Activated CD8-positive, alpha-beta T cell treated with anti-CD3 and anti-CD28 coated beads, Interleukin-2, amount 10 ng/mL, durations not matched to agents 7 days and 5 days (primary cell): ENCODE measurements at regions of chr19 and their contacts with region 1.

Region 1: GRCh38 chr19:54023191-54023590 is 31.8 kb downstream of the CACNG6 start:
- DNase-seq: no peak
- ATAC-seq: no peak
- H3K4me3 Mint-ChIP-seq: no peak overlapping the region
- H3K27ac Mint-ChIP-seq: no peak overlapping the region
- H3K4me1 Mint-ChIP-seq: peaks cover 13% of the 10 kb centered on the region
- H3K27me3 Mint-ChIP-seq: peaks cover 10% of the 10 kb centered on the region

Region 2: GRCh38 chr19:53844849-53845246 is 178.3 kb before region 1 on chr19:
- CTCF ChIA-PET with region 1: interaction called, 10 read pairs
- POLR2A ChIA-PET with region 1: interaction called, 3 read pairs
- DNase-seq: no peak
- ATAC-seq: no peak
- H3K4me3 Mint-ChIP-seq: no peak overlapping the region
- H3K27ac Mint-ChIP-seq: no peak overlapping the region
- H3K4me1 Mint-ChIP-seq: peaks cover 7% of the 10 kb centered on the region
- H3K27me3 Mint-ChIP-seq: peaks cover 14% of the 10 kb centered on the region